ENCODE measurements at regions of chr2 and their contacts with region 1.

Region 1: DNA sequence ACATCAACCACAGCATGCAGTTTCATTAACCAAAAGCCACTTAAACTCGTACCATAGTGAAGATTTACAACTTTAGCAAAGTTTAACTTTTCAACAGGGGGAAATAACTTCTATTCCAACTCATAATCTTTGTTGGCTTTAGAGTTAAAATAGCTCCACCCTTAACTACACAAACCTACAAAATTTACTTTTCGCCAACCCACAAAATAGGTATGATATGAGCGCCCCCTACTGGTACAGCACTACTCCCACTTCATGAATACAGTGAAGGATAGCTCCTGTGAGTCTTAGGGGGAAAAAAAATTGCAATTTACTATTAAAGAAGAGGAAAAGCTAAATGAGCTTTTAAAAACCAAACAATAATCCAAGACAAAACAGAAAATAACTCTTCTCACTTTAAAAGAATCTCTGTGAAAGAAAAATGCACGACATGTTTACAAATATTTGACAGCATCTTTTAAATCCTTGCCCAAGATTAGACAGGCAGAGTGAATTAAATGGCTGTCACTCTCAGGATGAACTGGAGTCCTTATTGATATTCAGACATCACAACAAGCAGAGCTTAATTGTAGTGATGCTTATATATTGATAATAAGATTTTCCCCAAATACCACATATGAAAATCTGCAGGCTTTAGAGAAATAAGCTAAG is 32.2 kb downstream of the TMEFF2 start:
- DNase-seq: peak in 1 of 2 donors; percentile 79
- ATAC-seq: peak in 7 of 8 donors; percentile 77 to 90 (median 86)
- H3K4me3 ChIP-seq: peak overlapping the region in 5 of 10 donors; percentile 11 to 34 (median 22)
- H3K27ac ChIP-seq: peak overlapping the region in 1 of 10 donors; percentile 11
- H3K4me1 ChIP-seq: peaks cover 0 to 11% (median 6%) of the 10 kb centered on the region in 9 donors
- H3K27me3 ChIP-seq: peaks cover 0 to 5% (median 0%) of the 10 kb centered on the region in 7 donors
- CTCF ChIP-seq: peak; percentile 81 to 98 (median 92)

Region 2: GRCh38 chr2:191555092-191555742 is 607.3 kb before region 1 on chr2:
- intact Hi-C with region 1: loop called in 7 of 10 experiments (anchors 2 to 10 kb)
- DNase-seq: peak; percentile 58 to 82
- ATAC-seq: peak; percentile 86 to 95 (median 90)
- H3K4me3 ChIP-seq: no peak overlapping the region
- H3K27ac ChIP-seq: no peak overlapping the region
- H3K4me1 ChIP-seq: no peaks in the 10 kb centered on the region
- H3K27me3 ChIP-seq: peaks cover 0 to 23% (median 5%) of the 10 kb centered on the region in 7 donors
- CTCF ChIP-seq: peak; percentile 50 to 84 (median 74)

Region 3: GRCh38 chr2:191566344-191566743 is 596.2 kb before region 1 on chr2:
- intact Hi-C with region 1: loop called in 3 of 10 experiments (anchors 5 to 10 kb)
- DNase-seq: peak in 1 of 2 donors; percentile 47
- ATAC-seq: peak in 6 of 8 donors; percentile 52 to 75 (median 62)
- H3K4me3 ChIP-seq: no peak overlapping the region
- H3K27ac ChIP-seq: no peak overlapping the region
- H3K4me1 ChIP-seq: peaks cover 0 to 23% (median 0%) of the 10 kb centered on the region in 9 donors
- H3K27me3 ChIP-seq: peaks cover 0 to 32% (median 14%) of the 10 kb centered on the region in 7 donors
- CTCF ChIP-seq: peak; percentile 32 to 81 (median 74)

Region 4: DNA sequence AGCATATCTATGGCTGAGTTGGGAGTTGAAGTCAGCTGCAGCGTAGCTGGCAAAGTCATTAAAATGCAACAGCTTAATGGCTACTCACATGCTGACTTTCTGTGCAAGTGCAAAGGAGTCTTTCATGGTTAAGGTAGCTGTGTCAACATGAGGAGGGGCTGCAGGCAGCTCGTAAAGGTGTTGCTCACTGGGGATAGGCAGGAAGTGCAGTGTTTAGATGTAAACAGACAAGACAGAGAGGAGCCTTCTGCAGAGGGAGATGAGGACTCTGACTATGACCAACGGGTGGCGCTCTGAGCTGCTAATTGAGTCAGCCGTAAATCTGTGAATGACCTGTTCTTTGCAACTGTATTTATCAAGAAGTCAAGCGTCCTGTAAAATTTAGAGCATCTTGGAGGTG is 293.3 kb before region 1 on chr2:
- intact Hi-C with region 1: loop called in 1 of 10 experiments (anchors 5 kb)
- DNase-seq: no peak
- ATAC-seq: no peak
- H3K4me3 ChIP-seq: no peak overlapping the region
- H3K27ac ChIP-seq: peak overlapping the region in 3 of 10 donors; percentile 84 to 88 (median 88)
- H3K4me1 ChIP-seq: peaks cover 7 to 60% (median 42%) of the 10 kb centered on the region in 9 donors
- H3K27me3 ChIP-seq: no peaks in the 10 kb centered on the region
- CTCF ChIP-seq: peak in 3 of 9 donors; percentile 13 to 21 (median 16)

Region 5: DNA sequence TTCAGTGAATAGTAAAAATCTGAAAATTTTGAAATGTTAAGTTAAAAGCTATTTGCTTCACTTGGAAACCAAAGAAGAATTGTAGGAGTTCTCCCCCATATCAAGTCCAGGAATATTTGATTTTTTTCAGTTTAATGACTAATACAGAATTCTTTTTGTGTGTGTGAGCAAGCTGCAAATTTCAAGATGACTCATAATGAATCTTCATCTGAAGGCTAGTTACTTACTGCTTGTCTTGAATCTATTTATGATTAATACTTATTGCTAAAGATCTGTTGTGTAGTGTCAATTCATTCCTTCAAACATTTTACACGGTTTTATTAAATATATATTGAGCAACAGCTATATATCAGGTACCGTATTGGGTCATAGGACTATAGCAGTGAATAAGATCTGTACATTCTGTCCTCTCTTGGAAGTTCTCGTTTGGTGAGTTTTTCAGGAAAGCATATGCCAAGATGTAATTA is 267.8 kb before region 1 on chr2:
- intact Hi-C with region 1: loop called in 1 of 10 experiments (anchors 10 kb)
- DNase-seq: no peak
- ATAC-seq: no peak
- H3K4me3 ChIP-seq: no peak overlapping the region
- H3K27ac ChIP-seq: peak overlapping the region in 1 of 10 donors; percentile 5
- H3K4me1 ChIP-seq: peaks cover 0 to 29% (median 0%) of the 10 kb centered on the region in 9 donors
- H3K27me3 ChIP-seq: no peaks in the 10 kb centered on the region
- CTCF ChIP-seq: no peak

Region 6: GRCh38 chr2:192119536-192119935 is 43.0 kb before region 1 on chr2:
- intact Hi-C with region 1: no loop called
- DNase-seq: no peak
- ATAC-seq: no peak
- H3K4me3 ChIP-seq: no peak overlapping the region
- H3K27ac ChIP-seq: no peak overlapping the region
- H3K4me1 ChIP-seq: peaks cover 0 to 23% (median 4%) of the 10 kb centered on the region in 9 donors
- H3K27me3 ChIP-seq: no peaks in the 10 kb centered on the region
- CTCF ChIP-seq: no peak

Measured in heart right ventricle (tissue), 16 donors.